HepG2 (cell line): ENCODE measurements at regions of chr20 and their contacts with region 1.

Region 1: GRCh38 chr20:4022386-4023286 is 7.3 kb upstream of the RNF24 start:
- DNase-seq: no peak
- ATAC-seq: no peak
- H3K4me3 ChIP-seq: no peak overlapping the region
- H3K27ac ChIP-seq: no peak overlapping the region
- H3K4me1 ChIP-seq: peaks cover 9% of the 10 kb centered on the region
- H3K27me3 ChIP-seq: peaks cover 3 to 27% of the 10 kb centered on the region in 2 experiments
- CTCF ChIP-seq: no peak
- EP300 ChIP-seq: no peak
- POLR2A ChIP-seq: no peak
- RAD21 ChIP-seq: no peak

Region 2: DNA sequence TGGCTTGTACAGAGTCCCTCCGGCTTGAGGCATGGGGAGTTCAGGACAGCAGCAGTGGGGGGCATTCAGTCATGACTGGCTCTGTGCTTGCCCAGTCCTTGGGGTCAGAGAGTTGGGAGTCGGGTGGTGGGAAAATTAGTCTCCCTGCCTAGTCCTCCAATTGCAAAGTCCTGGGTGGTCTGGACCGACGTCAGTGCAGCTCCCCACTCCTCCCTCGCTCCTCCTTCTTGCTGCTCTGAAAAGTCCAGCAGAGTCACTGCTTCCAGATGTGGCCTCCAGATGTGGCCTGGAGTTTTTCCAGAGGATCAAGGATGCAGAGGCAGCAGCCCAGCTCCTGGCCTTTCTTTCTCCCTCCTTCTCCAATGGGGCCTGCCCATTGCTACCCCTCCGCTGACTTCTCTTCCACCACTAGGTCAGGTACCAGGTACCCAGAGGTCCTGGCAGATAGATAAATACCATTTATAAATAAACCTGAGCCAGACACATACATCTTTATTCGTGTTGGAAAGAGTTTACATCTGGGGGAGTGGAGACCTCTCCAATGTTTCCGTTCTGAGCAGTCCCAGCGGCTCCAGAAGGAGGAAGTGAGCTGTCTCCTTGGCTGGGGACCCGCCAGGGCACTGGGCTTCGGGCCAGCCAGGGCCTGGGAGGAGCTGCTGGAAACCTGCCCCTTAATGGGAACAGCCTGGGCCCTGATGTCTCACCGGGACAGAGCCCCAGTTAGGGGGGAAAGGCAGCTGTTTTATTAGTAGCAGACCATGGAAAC is 41.7 kb after region 1 on chr20:
- CTCF ChIA-PET with region 1: no interaction called
- POLR2A ChIA-PET with region 1: no interaction called
- in situ Hi-C with region 1: loop called (anchors 5 kb)
- intact Hi-C with region 1: no loop called
- DNase-seq: no peak
- ATAC-seq: peak; percentile 31
- H3K4me3 ChIP-seq: no peak overlapping the region; a peak in 1 of 6 replicates
- H3K27ac ChIP-seq: no peak overlapping the region
- H3K4me1 ChIP-seq: peaks cover 23% of the 10 kb centered on the region
- H3K27me3 ChIP-seq: peaks cover 3 to 33% of the 10 kb centered on the region in 2 experiments; a peak in 3 of 5 replicates
- CTCF ChIP-seq: no peak
- EP300 ChIP-seq: no peak
- POLR2A ChIP-seq: no peak
- RAD21 ChIP-seq: no peak